Sigmoid colon (tissue), 7 donors: ENCODE measurements at regions of chr7 and their contacts with region 1.

Region 1: DNA sequence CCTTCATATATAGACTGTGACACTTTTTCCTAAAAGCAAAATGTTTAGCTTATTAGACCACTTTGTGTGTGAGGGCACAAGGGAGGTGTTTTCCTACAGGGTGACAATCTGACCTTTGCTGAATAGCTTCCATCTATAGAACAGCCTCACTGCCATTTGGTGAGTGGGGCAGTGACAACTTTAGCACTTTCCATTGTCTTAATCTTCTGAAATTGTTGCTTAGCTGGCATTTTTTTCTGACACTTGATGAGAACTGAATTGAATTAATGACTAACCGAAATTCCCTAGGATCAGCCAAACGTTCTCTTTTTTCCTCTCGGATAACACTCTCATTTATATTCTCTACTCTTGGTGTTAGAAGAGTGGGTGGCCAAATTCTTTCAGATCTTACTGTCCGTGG is 30.2 kb downstream of the KDM7A start:
- DNase-seq: no peak
- H3K4me3 ChIP-seq: no peak overlapping the region
- H3K27ac ChIP-seq: no peak overlapping the region
- H3K4me1 ChIP-seq: peaks cover 0 to 22% (median 3%) of the 10 kb centered on the region in 4 donors
- H3K27me3 ChIP-seq: no peaks in the 10 kb centered on the region
- CTCF ChIP-seq: no peak
- EP300 ChIP-seq: no peak
- POLR2A ChIP-seq: no peak

Region 2: DNA sequence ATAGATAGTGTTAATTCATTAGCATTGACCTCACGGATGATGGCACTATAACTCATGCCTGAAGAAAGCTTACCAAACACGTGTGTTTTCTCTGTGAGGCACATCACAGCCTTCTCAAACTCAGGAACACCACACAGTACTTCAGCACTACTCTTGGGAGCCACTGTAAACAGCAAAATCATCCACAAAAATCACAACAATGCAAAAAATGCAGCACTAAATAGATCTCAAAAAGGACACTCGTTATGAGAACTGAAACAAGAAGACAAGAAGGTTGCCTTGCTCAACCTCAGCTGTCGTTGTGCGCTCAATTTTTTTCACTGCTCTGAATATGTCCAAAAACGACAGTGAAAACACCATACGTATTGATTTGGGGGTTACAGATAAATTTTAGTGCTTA is 71.8 kb before region 1 on chr7:
- intact Hi-C with region 1: no loop called
- DNase-seq: no peak
- H3K4me3 ChIP-seq: no peak overlapping the region
- H3K27ac ChIP-seq: no peak overlapping the region
- H3K4me1 ChIP-seq: no peaks in the 10 kb centered on the region
- H3K27me3 ChIP-seq: no peaks in the 10 kb centered on the region
- CTCF ChIP-seq: no peak
- EP300 ChIP-seq: no peak
- POLR2A ChIP-seq: no peak

Region 3: GRCh38 chr7:140127360-140128127 is 19.0 kb before region 1 on chr7:
- intact Hi-C with region 1: loop called (anchors 2 kb)
- DNase-seq: no peak
- H3K4me3 ChIP-seq: no peak overlapping the region
- H3K27ac ChIP-seq: no peak overlapping the region
- H3K4me1 ChIP-seq: no peaks in the 10 kb centered on the region
- H3K27me3 ChIP-seq: no peaks in the 10 kb centered on the region
- CTCF ChIP-seq: no peak
- EP300 ChIP-seq: no peak
- POLR2A ChIP-seq: no peak